ENCODE measurements at regions of chr6 and their contacts with region 1.

Region 1: GRCh38 chr6:4370066-4370465 is 234.7 kb upstream of the ECI2 start:
- DNase-seq: peak; percentile 45
- ATAC-seq: peak; percentile 71 to 85; a peak in 5 of 6 replicates
- H3K4me3 ChIP-seq: no peak overlapping the region
- H3K27ac ChIP-seq: peak overlapping the region; percentile 74 to 87
- H3K4me1 ChIP-seq: peaks cover 30% of the 10 kb centered on the region
- CTCF ChIP-seq: no peak
- EP300 ChIP-seq: no peak
- POLR2A ChIP-seq: no peak
- RAD21 ChIP-seq: no peak

Region 2: DNA sequence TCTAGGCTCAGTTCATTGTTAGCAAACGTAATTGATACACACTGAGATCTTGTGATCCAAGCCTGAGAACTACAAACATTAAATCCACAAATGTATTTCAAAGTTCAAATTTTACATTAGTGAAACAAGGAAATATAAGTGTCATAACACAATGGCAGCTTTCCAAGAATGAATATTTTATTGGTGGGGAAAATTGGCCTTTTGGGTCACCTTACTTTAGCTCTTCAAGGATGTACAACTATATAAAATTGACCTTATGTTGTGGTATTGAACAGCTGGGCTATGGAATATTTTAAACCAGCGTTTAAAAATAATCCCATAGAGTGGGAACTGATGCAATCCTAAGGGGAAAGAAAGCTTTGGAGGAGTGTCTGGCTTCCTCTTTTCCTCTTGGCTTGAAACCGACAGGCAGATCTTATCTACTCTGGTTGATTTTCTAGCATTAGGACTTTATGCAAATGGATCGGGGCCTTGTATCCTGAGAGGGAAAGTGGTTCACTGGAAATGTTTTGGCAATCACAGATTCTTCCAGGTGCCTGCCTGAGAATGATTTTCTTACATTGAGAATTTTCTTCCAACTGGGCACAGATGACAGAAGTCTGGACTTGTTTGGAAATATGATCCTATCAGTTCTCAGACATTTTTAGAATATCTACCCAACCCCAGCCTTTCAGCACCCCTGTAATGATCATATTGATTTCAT is 49.9 kb before region 1 on chr6:
- CTCF ChIA-PET with region 1: no interaction called
- POLR2A ChIA-PET with region 1: interaction called, 10 read pairs
- DNase-seq: peak in 1 of 2 experiments; percentile 42
- ATAC-seq: peak; percentile 58 to 64; a peak in 5 of 6 replicates
- H3K4me3 ChIP-seq: no peak overlapping the region
- H3K27ac ChIP-seq: peak overlapping the region; percentile 88 to 91
- H3K4me1 ChIP-seq: peaks cover 59% of the 10 kb centered on the region
- CTCF ChIP-seq: no peak
- EP300 ChIP-seq: no peak
- POLR2A ChIP-seq: no peak
- RAD21 ChIP-seq: no peak

Region 3: GRCh38 chr6:4388675-4389074 is 18.6 kb after region 1 on chr6:
- CTCF ChIA-PET with region 1: no interaction called
- POLR2A ChIA-PET with region 1: no interaction called
- DNase-seq: no peak
- ATAC-seq: no peak
- H3K4me3 ChIP-seq: no peak overlapping the region
- H3K27ac ChIP-seq: 0 out of 6 replicates have a peak overlapping the region, but pooled peaks of 1 of the 2 experiments have one; percentile 28
- H3K4me1 ChIP-seq: peaks cover 5% of the 10 kb centered on the region; the same call in 1 of the 3 replicates
- CTCF ChIP-seq: no peak
- EP300 ChIP-seq: no peak
- POLR2A ChIP-seq: no peak
- RAD21 ChIP-seq: no peak

Measured in A549 (cell line).